Activated T-helper 1 cell treated with anti-CD3 and anti-CD28 coated beads, Interleukin-12 subunit alpha, Interleukin-12 subunit beta, Interleukin-2, Interleukin-4 antibody, amounts not matched to agents 30 ng/mL and 10 ng/mL and 1 ng/mL, durations not matched to agents 14 hours and 24 hours and 36 hours (primary cell): ENCODE measurements at regions of chr3 and their contacts with region 1.

Region 1: DNA sequence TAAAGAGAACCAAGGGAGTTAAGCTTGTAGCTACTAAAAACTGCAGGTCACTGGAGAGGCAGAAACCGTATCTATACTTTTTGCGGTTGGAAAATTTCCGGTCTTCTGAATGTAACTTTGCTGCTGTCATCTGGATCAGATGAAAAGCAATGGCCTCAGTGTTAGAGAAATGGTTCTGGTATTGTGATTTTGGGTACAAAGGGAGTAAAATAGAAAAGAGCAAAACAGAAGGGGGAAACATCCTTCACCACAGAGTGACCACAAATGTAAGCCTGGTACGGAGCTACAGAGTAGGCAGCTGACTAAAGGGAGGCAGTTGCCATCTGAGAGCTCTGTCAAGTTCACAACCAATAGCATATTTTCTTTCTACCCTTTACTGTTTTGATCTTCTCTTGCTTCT is 5.6 kb downstream of the CD96 start:
- DNase-seq: peak; percentile 48
- H3K4me3 Mint-ChIP-seq: no peak overlapping the region
- H3K27ac Mint-ChIP-seq: no peak overlapping the region
- H3K4me1 Mint-ChIP-seq: peaks cover 25% of the 10 kb centered on the region
- H3K27me3 Mint-ChIP-seq: no peaks in the 10 kb centered on the region

Region 2: DNA sequence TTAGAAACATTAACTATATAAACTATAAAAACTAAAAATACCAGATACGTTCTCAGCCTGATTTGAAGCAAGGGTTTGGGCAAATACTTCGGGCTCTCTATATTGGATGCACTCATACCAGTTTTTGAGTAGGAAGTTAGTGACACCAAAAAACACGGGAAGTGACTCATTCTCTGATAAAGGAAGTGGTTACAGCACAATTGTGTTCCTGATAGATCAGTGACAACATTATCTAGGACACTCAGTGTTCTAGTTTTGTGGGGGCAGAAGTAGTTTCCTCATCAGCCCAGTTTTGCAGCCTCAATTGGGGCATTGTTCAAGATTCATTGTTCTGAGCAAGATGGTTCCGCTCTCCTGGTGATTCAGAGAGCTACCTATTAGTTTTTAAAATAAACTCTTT is 1740.7 kb before region 1 on chr3:
- intact Hi-C with region 1: loop called (anchors 2 kb)
- DNase-seq: peak; percentile 30
- H3K4me3 Mint-ChIP-seq: peak overlapping the region; percentile 35
- H3K27ac Mint-ChIP-seq: peak overlapping the region; percentile 67
- H3K4me1 Mint-ChIP-seq: peaks cover 39% of the 10 kb centered on the region
- H3K27me3 Mint-ChIP-seq: peaks cover 8% of the 10 kb centered on the region

Region 3: GRCh38 chr3:111376320-111376719 is 171.3 kb before region 1 on chr3:
- intact Hi-C with region 1: no loop called
- DNase-seq: no peak
- H3K4me3 Mint-ChIP-seq: no peak overlapping the region
- H3K27ac Mint-ChIP-seq: no peak overlapping the region
- H3K4me1 Mint-ChIP-seq: no peaks in the 10 kb centered on the region
- H3K27me3 Mint-ChIP-seq: peaks cover 7% of the 10 kb centered on the region

Region 4: DNA sequence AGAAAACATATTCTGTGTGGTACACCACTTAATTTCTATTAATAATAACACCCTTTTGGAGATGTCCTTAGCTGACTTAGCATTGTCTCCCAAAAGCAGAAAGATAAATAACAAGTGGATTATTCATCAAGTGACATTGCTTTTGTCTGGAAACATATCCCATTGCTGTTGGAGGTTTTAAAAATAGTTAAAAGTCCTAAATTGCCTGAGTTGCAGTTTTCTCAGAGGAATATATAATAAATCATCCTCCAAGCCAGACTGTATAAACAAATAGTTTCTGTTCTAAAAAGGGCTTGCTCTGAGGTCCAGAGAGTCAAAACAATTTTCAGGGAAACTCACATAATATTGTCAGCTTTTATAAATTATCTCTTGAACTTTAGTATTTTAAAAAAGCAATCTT is 66.1 kb before region 1 on chr3:
- intact Hi-C with region 1: no loop called
- DNase-seq: no peak
- H3K4me3 Mint-ChIP-seq: no peak overlapping the region
- H3K27ac Mint-ChIP-seq: no peak overlapping the region
- H3K4me1 Mint-ChIP-seq: no peaks in the 10 kb centered on the region
- H3K27me3 Mint-ChIP-seq: peaks cover 1% of the 10 kb centered on the region

Region 5: GRCh38 chr3:111566844-111567243 is 19.2 kb after region 1 on chr3:
- intact Hi-C with region 1: loop called (anchors 2 kb)
- DNase-seq: no peak
- H3K4me3 Mint-ChIP-seq: no peak overlapping the region
- H3K27ac Mint-ChIP-seq: no peak overlapping the region
- H3K4me1 Mint-ChIP-seq: peaks cover 70% of the 10 kb centered on the region
- H3K27me3 Mint-ChIP-seq: no peaks in the 10 kb centered on the region

Region 6: DNA sequence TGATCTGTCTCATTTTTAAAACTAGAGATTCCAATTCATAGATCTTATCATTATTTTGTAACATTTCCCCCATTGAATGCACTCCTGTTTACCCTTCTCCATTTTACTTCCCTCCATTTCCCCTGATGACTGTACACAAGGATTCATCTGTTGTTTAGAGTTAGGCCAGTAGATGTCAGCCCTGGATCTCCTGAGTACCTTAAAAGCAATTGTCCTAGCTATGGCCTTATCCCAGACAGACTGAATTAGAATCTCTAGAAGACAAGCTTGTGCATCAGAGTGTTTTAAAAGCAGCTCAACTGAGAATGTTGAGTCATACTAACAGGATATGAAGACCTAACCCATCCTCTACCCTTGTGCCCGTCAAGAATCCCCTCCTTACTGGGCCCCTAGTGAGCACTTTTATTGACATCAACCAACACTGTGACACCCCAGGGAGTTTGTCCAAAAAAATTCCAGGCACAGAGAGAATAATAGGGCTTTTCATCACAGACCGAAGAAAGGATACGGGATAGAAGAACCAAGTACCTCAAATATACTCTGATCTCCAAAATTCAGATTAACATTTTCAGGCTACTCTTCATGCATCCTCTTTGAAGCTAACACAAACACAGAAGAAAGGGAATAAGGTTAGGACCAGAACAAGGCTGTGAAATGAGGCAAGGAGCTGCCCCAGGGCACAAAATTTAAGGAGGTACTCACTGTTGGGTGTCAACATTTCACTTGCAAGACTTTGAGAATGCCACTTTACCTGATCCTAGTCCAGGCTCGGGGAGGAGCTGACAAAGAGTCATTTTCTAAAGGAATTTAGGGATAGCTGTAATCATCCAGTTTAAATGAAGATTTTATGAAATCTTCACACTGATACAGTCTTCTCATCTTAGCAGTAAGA is 30.4 kb after region 1 on chr3:
- intact Hi-C with region 1: loop called (anchors 1 kb)
- DNase-seq: no peak
- H3K4me3 Mint-ChIP-seq: peak overlapping the region; percentile 1
- H3K27ac Mint-ChIP-seq: peak overlapping the region; percentile 70
- H3K4me1 Mint-ChIP-seq: peaks cover 82% of the 10 kb centered on the region
- H3K27me3 Mint-ChIP-seq: no peaks in the 10 kb centered on the region

Region 7: GRCh38 chr3:111595232-111595631 is 47.6 kb after region 1 on chr3 and contains the start of gene ZBED2:
- intact Hi-C with region 1: loop called (anchors 1 kb)
- DNase-seq: no peak
- H3K4me3 Mint-ChIP-seq: peak within 1 kb of the TSS; percentile 97
- H3K27ac Mint-ChIP-seq: peak within 1 kb of the TSS; percentile 99
- H3K4me1 Mint-ChIP-seq: peaks cover 65% of the 10 kb centered on the region
- H3K27me3 Mint-ChIP-seq: no peaks in the 10 kb centered on the region
- total RNA-seq, gene ZBED2: 812 and 827 TPM in 2 replicates

Region 8: DNA sequence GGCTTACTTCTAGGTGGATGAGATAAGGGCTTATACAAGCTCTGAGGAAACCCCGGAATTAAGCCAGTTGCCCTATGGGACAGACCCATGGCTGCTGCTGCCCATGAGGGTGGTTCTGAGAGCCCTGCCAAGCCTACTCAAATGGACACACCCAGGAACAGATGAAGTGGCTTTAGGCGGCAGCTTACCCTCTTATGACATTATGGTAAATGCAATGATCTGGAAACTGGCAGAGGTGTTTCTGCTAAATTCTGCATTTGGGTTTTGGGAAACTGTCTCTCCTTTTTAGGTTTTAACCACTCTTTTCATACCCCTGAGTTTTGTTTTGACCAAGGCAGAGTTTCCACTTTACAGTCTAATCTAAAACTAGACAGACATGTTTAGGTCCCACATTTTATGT is 56.5 kb after region 1 on chr3:
- intact Hi-C with region 1: loop called (anchors 2 kb)
- DNase-seq: no peak
- H3K4me3 Mint-ChIP-seq: peak overlapping the region; percentile 53
- H3K27ac Mint-ChIP-seq: peak overlapping the region; percentile 99
- H3K4me1 Mint-ChIP-seq: peaks cover 84% of the 10 kb centered on the region
- H3K27me3 Mint-ChIP-seq: no peaks in the 10 kb centered on the region

Region 9: GRCh38 chr3:111616417-111617105 is 68.9 kb after region 1 on chr3:
- intact Hi-C with region 1: loop called (anchors 1 kb)
- DNase-seq: peak; percentile 61
- H3K4me3 Mint-ChIP-seq: peak overlapping the region; percentile 70
- H3K27ac Mint-ChIP-seq: peak overlapping the region; percentile 98
- H3K4me1 Mint-ChIP-seq: peaks cover 84% of the 10 kb centered on the region
- H3K27me3 Mint-ChIP-seq: no peaks in the 10 kb centered on the region

Region 10: DNA sequence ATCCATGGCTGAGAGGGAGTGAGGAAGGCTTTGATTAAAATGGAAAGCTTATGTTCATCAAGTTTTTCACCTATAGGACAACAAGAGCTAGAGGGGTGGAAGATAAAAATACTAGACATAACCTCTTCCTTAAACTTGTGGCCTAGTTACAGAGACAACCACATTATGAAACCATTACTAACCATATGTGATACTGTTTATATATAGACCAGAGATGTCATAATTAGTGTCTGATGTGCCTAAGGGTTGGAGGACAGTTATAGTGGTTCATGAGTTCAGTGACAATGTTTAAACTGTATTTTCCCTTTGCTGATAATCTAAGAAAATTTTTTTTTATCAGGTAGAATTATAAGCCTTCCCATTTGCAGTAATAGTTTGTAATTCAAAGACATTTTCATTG is 335.2 kb after region 1 on chr3:
- intact Hi-C with region 1: no loop called
- DNase-seq: no peak
- H3K4me3 Mint-ChIP-seq: no peak overlapping the region
- H3K27ac Mint-ChIP-seq: no peak overlapping the region
- H3K4me1 Mint-ChIP-seq: no peaks in the 10 kb centered on the region
- H3K27me3 Mint-ChIP-seq: peaks cover 3% of the 10 kb centered on the region